ENCODE measurements at regions of chr17 and their contacts with region 1.

Region 1: DNA sequence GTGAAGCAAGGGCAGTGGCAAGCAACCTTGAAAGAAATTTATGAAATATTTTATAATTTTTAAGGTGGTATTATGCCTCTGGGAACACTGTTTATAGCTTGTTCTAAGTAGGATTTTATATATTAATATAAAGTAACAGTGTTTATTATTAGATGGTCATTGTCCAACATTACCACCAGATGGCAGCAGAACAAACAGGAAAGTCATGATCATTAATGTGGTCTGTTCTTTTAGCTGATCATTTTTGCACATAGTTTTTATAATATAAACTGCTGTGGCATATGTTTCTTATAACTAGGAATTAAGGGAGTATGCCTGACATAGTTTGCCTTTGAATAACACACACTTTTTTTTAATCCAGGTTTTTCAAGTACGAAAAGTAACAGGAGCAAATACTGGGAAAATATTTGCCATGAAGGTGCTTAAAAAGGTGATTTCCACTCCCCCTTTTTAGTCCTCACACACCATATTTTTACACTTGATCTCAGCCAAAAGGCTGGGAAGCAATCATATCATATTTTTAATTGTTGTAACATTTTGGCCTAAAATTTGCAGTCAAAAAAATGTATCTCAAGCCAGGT is 21.4 kb downstream of the RPS6KB1 start:
- DNase-seq: peak; percentile 72
- CTCF ChIP-seq: peak; percentile 40

Region 2: DNA sequence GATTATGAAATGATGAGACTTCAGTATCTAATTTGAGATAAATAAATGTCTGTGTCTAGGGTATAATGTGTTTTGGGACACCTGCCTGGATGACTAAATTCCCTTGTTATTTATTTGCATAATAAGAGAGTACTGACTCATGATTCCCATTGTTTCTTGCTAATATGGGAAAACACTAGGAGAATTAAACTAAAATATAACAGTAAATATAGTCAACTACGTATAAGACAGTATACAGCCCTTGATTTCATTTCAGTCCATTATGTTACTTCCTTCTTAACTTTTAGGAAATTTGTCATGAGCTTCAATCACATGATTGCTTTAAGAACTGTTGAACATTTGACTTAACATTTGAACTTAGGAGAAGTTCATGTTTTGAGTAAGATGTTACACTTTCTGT is 144.5 kb before region 1 on chr17:
- CTCF ChIA-PET with region 1: no interaction called
- POLR2A ChIA-PET with region 1: no interaction called
- DNase-seq: no peak
- CTCF ChIP-seq: no peak

Region 3: GRCh38 chr17:59892924-59893676 is 21.3 kb before region 1 on chr17 and contains the starts of genes RPS6KB1 and TUBD1:
- CTCF ChIA-PET with region 1: interaction called, 18 read pairs
- POLR2A ChIA-PET with region 1: no interaction called
- DNase-seq: peak; percentile 98
- CTCF ChIP-seq: no peak

Region 4: DNA sequence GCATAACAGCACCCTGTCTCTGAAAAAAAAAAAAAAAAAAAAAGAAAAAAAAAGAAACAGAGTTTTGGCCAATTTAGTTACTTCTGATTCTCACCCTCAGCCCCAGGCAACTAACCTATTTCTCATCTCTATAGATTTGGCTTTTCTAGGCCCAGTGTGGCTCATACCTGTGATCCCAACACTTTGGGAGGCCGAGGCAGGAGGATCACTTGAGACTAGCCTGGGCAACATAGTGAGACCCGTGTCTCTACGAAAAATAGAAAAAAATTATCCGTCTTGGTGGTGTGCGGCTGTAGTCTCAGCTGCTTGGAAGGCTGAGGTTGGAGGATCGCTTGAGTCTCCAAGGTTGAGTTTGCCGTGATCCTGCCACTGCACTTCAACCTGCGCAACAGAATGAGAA is 12.8 kb before region 1 on chr17:
- CTCF ChIA-PET with region 1: interaction called, 10 read pairs
- POLR2A ChIA-PET with region 1: no interaction called
- DNase-seq: no peak
- CTCF ChIP-seq: no peak

Region 5: DNA sequence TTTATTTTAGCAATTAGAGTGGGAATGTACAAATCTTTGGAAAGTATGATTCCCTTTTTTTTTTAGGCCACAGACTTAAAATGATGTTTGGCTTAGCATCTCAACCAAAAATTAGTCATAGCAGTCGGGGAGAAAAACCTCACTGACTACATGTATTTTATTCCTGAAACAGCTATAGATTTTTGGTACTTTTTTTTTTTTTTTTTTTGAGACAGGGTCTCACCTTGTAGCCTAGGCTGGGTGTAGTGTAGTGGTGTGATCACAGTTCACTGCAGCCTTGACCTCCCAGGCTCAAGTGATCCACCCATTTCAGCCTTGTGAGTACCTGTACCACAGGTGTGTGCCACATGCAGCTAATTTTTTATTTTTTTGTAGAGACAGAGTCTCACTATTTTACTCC is 26.8 kb after region 1 on chr17:
- CTCF ChIA-PET with region 1: interaction called, 30 read pairs
- POLR2A ChIA-PET with region 1: no interaction called
- DNase-seq: no peak
- CTCF ChIP-seq: no peak

Region 6: DNA sequence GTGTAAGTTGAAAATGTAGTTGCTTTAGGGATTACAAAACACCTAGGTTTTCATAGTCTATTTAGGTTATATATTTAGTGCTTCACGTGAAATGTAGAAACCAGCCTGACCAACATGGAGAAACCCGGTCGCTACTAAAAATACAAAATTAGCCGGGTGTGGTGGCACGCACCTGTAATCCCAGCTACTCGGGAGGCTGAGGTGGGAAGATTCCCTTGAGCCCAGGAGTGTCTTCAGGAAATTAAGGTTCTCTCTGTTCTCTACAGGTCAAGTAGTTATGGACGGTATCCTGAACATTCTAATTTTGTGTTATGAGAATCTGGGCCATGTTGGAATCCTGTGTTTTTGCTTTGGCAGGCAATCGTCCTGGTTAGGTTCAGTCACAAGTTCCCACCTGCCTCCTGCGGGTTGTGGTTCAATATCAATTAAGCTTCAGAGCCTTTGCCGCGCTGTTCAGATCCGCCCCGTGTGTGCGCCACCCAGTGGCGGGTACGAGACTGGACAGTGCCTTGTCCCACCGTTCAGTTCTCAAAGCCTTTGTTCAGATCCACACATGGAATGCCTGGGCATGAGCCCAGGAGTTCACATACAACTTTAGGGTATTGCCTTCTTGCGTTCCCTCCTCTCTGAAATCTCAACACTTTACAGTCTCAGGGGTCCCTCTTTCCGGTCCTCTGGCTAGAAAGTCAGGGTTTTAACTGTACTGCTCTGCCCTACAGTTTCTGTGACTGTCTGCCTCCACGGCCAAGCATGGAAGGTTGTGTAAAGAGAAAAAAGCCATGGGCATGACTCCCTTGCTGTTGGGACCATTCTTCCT is 122.6 kb after region 1 on chr17:
- CTCF ChIA-PET with region 1: interaction called, 11 read pairs
- POLR2A ChIA-PET with region 1: no interaction called
- DNase-seq: peak; percentile 77
- CTCF ChIP-seq: peak; percentile 94

Measured in GM10248 (cell line).